Left cardiac atrium (tissue), 4 donors: ENCODE measurements at regions of chr16 and their contacts with region 1.

Region 1: DNA sequence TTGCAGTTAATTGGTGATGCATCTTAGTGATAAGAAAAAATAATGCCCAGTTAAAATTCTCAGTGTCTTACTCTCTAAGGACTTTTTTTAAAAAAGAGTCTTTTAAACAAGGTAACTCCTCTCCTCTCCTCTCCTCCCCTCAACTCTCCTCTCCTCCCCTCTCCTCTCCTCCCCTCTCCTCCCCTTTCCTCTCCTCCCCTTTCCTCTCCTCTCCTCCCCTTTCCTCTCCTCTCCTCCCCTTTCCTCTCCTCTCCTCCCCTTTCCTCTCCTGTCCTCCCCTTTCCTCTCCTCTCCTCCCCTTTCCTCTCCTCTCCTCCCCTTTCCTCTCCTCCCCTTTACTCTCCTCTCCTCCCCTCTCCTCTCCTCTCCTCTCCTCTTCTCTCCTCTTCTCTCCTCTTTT is 675.9 kb upstream of the RBFOX1 start:
- DNase-seq: no peak
- ATAC-seq: no peak

Region 2: DNA sequence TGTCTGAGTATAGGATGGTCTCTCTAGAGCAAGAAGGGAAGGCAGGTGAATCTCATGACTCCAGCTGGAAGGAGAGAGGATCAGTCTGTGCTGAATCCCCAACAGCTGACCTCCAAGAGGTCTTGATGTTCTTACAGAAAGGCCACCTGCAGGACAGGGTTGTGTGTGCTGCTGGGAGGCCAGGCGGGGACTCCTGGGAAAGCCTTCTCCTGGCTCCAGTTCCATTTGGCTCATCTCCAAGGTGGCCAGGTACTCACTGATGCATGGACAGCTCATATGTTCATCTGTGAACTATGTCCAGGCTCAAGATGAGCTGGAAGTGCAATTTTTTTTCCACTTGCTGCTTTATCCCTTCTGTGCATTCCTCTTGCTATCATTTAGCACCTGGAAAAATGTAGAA is 54.4 kb before region 1 on chr16:
- intact Hi-C with region 1: loop called in 1 of 2 experiments (anchors 10 kb)
- DNase-seq: no peak
- ATAC-seq: no peak